ENCODE measurements at regions of chr14 and their contacts with region 1.

Region 1: DNA sequence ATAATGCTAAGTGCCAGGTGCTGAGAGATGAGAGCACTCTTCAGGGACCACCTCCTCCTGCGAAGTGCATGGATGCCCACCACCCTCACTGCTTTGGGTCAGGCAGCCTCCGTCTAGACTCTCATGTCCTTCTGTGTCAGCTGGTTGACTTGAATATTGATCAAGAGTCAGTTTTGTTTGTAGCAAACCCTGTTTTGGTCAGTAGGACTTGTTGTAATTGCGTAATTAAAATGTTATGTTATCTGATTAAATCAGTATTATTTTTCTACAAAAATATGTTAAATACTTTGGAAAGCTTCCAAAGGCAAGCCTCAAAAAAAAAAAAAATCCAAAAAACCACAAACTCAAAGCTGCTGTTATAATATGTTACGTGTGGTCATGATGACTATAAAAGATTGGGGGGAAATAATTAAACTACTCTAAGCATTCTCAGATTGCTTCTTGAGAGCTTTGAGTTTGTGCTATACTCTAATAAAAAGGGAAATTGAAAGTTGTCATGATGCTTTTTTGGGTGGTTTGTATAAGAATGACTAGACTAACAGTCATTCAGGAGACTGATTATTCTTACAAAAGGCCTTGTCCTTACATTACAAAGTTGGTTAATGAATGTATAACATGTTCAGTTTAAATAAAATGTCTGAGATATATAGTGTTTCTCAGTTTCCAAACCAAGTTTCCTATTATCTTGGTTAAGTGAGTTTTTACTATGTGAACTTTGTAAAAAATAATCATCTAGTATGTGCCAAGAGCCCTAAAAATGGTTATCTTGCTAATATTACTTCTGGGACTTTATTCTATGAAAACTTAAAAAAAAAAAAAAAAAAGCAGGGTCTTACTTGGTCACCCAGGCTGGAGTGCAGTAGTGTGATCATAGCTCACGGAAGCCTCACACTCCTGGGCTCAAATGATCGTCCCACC is 459.9 kb upstream of the RGS6 start:
- DNase-seq: peak; percentile 41
- H3K4me3 Mint-ChIP-seq: no peak overlapping the region
- H3K27ac Mint-ChIP-seq: no peak overlapping the region
- H3K4me1 Mint-ChIP-seq: peaks cover 47% of the 10 kb centered on the region
- H3K27me3 Mint-ChIP-seq: no peaks in the 10 kb centered on the region

Region 2: GRCh38 chr14:71523630-71524319 is 51.5 kb after region 1 on chr14:
- intact Hi-C with region 1: loop called (anchors 5 kb)
- DNase-seq: no peak
- H3K4me3 Mint-ChIP-seq: no peak overlapping the region
- H3K27ac Mint-ChIP-seq: no peak overlapping the region
- H3K4me1 Mint-ChIP-seq: peaks cover 20% of the 10 kb centered on the region
- H3K27me3 Mint-ChIP-seq: no peaks in the 10 kb centered on the region

Measured in activated CD4-positive, alpha-beta T cell treated with anti-CD3 and anti-CD28 coated beads, Interleukin-2, amount 10 ng/mL, durations not matched to agents 24 days and 14 days (primary cell).